ENCODE measurements at regions of chr7 and their contacts with region 1.

Region 1: DNA sequence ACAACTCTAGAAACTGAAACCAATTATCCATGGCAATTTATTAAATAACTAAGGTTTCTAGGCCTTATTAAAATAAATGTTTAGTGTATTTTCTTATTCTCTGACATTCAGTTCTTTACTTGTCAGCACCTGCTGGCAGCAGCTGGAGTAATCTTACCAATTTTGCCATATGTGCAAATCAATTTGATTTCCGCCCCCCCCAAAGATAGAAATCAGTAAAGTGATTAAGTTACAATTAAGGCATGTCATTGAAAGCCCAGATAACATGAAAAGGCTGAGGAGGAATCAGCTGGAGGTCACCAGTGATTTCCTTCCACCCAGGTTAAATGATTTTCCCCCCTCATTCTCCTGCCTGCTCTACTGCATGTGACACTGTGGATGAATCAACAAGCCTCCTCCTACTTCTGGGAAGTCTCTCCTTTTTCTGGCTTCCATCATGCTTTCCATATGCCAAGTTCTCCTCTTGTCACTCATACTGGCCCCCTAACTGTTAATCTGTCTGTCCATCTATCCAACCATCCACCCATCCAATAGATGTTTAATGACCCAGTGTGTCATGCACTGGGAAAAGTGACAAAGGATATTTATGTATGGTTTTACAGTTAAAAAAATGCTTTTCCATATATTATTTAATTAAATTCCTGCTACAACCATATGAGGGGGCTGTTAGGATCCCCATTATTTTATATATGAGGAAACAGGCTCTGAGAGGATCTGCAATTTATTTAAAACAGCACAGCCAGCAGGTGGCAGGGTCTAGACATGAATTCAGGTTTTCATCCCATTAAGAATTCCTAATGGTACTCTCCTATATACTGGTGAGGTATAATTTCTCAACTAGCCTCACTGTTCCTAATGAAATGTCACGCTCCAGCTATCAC is 116.5 kb downstream of the ATXN7L1 start:
- DNase-seq: peak; percentile 60
- H3K4me3 ChIP-seq: no peak overlapping the region
- H3K27ac ChIP-seq: no peak overlapping the region
- H3K4me1 ChIP-seq: no peaks in the 10 kb centered on the region
- H3K27me3 ChIP-seq: no peaks in the 10 kb centered on the region
- CTCF ChIP-seq: peak in 3 of 4 experiments; percentile 65 to 74 (median 71)
- POLR2A ChIP-seq: no peak

Region 2: DNA sequence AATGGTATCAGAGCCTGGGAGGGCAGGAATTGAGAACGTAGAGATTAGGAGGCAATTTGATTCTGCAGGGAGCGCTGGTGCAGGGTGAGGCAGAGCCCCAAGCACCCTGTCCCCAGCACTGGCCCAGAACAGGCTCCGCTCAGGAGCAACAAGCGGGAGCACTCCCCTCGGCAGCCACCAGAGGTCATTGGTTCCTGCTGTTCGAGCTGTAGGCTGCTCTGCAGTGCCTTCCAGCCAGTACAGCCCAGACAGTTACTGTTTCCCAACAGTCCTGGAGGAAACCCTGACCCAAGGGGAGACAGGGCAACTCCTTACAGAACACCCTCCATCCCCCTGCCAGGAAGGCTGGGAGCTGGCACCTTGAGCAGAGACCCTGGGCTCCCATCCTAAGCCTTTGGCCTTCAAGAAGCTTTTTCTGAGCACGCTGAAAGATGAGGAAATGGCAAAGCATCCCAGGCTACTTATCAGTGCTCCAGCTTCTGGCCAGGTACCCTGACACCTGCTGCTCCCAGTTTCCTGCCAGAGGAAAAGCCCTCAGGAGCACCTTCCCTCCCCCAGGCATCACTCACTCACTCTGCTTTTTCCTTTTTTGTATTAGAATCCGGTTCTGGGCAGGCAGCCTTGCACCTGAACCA is 107.4 kb before region 1 on chr7:
- intact Hi-C with region 1: loop called (anchors 10 kb)
- DNase-seq: peak; percentile 63
- H3K4me3 ChIP-seq: no peak overlapping the region
- H3K27ac ChIP-seq: no peak overlapping the region
- H3K4me1 ChIP-seq: peaks cover 10% of the 10 kb centered on the region
- H3K27me3 ChIP-seq: no peaks in the 10 kb centered on the region
- CTCF ChIP-seq: peak in 3 of 4 experiments; percentile 66 to 82 (median 79)
- POLR2A ChIP-seq: no peak

Region 3: GRCh38 chr7:105876091-105876963 is 116.4 kb after region 1 on chr7 and contains the start of gene ATXN7L1:
- intact Hi-C with region 1: loop called (anchors 5 kb)
- DNase-seq: peak; percentile 96
- H3K4me3 ChIP-seq: peak within 1 kb of the TSS; percentile 56 to 58
- H3K27ac ChIP-seq: peak within 1 kb of the TSS; percentile 79 to 85
- H3K4me1 ChIP-seq: no peaks in the 10 kb centered on the region
- H3K27me3 ChIP-seq: no peaks in the 10 kb centered on the region
- CTCF ChIP-seq: peak; percentile 50 to 85 (median 64)
- POLR2A ChIP-seq: peak; percentile 78
- total RNA-seq, gene ATXN7L1: 12.6 to 28.1 TPM

Region 4: DNA sequence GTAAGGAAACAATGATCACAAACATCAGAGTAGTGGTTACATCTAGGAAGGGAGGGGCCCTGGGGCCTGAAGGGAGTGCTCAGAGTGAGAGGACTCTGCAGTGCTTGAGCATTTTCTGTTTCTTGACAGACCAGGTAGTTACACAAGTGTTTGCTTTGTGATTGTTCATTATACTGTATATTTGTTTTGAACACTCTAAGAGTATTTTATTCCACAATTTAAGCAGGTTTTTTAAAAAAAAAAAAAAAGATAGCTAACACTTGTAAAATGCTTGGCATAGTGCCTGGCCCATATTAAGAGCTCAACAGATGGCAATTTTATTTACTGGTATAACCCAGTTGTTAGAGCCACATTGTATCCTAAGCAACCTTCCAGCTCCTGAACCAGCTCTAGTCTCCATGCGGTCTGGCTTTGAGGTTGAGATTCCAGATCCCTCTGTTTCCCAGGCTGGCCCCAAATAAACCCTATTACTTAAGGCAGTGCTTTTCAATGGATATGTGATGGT is 136.5 kb after region 1 on chr7:
- intact Hi-C with region 1: no loop called
- DNase-seq: peak; percentile 16
- H3K4me3 ChIP-seq: no peak overlapping the region
- H3K27ac ChIP-seq: no peak overlapping the region
- H3K4me1 ChIP-seq: no peaks in the 10 kb centered on the region
- H3K27me3 ChIP-seq: no peaks in the 10 kb centered on the region
- CTCF ChIP-seq: no peak
- POLR2A ChIP-seq: no peak

Region 5: GRCh38 chr7:105934572-105935185 is 174.8 kb after region 1 on chr7:
- intact Hi-C with region 1: loop called (anchors 10 kb)
- DNase-seq: peak; percentile 27
- H3K4me3 ChIP-seq: no peak overlapping the region
- H3K27ac ChIP-seq: no peak overlapping the region
- H3K4me1 ChIP-seq: no peaks in the 10 kb centered on the region
- H3K27me3 ChIP-seq: no peaks in the 10 kb centered on the region
- CTCF ChIP-seq: peak in 3 of 4 experiments; percentile 23 to 50 (median 33)
- POLR2A ChIP-seq: no peak

Region 6: GRCh38 chr7:106009403-106010226 is 249.7 kb after region 1 on chr7:
- intact Hi-C with region 1: loop called (anchors 2 kb)
- DNase-seq: peak; percentile 63
- H3K4me3 ChIP-seq: no peak overlapping the region
- H3K27ac ChIP-seq: no peak overlapping the region
- H3K4me1 ChIP-seq: no peaks in the 10 kb centered on the region
- H3K27me3 ChIP-seq: no peaks in the 10 kb centered on the region
- CTCF ChIP-seq: peak; percentile 78 to 96 (median 94)
- POLR2A ChIP-seq: no peak

Region 7: GRCh38 chr7:106041140-106041717 is 281.3 kb after region 1 on chr7:
- intact Hi-C with region 1: loop called (anchors 2 kb)
- DNase-seq: no peak
- H3K4me3 ChIP-seq: no peak overlapping the region
- H3K27ac ChIP-seq: no peak overlapping the region
- H3K4me1 ChIP-seq: no peaks in the 10 kb centered on the region
- H3K27me3 ChIP-seq: no peaks in the 10 kb centered on the region
- CTCF ChIP-seq: peak; percentile 30 to 68 (median 39)
- POLR2A ChIP-seq: no peak

Measured in prostate gland (tissue), 2 donors.